Activated naive CD4-positive, alpha-beta T cell treated with anti-CD3 and anti-CD28 coated beads for 36 hours (primary cell): ENCODE measurements at regions of chr2 and their contacts with region 1.

Region 1: GRCh38 chr2:6909431-6910385 is 7.5 kb upstream of the RNF144A start:
- DNase-seq: peak; percentile 64
- H3K4me3 Mint-ChIP-seq: peak overlapping the region; percentile 65
- H3K27ac Mint-ChIP-seq: peak overlapping the region; percentile 100
- H3K4me1 Mint-ChIP-seq: peaks cover 89% of the 10 kb centered on the region
- H3K27me3 Mint-ChIP-seq: no peaks in the 10 kb centered on the region

Region 2: DNA sequence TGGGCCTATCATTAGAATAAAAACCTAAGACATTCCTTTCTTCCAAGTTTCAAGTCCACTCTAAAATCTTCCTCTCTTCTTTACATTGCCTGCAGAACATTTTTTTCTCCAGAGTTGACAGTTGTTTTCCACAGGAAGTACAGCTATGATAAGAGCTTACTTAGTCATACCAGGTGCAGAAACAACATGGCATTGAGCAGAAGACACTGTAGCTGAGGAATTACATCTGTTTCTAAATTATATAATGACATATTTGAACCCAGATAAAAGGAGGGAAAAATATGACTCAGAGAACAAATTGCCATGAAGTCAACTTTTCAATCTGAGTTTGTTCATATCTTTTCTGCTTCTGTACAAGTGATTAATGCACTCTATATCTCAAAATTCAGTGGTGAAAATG is 74.2 kb before region 1 on chr2:
- CTCF ChIA-PET with region 1: no interaction called
- intact Hi-C with region 1: loop called (anchors 1 kb)
- DNase-seq: no peak
- H3K4me3 Mint-ChIP-seq: no peak overlapping the region
- H3K27ac Mint-ChIP-seq: peak overlapping the region; percentile 1
- H3K4me1 Mint-ChIP-seq: peaks cover 19% of the 10 kb centered on the region
- H3K27me3 Mint-ChIP-seq: no peaks in the 10 kb centered on the region

Region 3: DNA sequence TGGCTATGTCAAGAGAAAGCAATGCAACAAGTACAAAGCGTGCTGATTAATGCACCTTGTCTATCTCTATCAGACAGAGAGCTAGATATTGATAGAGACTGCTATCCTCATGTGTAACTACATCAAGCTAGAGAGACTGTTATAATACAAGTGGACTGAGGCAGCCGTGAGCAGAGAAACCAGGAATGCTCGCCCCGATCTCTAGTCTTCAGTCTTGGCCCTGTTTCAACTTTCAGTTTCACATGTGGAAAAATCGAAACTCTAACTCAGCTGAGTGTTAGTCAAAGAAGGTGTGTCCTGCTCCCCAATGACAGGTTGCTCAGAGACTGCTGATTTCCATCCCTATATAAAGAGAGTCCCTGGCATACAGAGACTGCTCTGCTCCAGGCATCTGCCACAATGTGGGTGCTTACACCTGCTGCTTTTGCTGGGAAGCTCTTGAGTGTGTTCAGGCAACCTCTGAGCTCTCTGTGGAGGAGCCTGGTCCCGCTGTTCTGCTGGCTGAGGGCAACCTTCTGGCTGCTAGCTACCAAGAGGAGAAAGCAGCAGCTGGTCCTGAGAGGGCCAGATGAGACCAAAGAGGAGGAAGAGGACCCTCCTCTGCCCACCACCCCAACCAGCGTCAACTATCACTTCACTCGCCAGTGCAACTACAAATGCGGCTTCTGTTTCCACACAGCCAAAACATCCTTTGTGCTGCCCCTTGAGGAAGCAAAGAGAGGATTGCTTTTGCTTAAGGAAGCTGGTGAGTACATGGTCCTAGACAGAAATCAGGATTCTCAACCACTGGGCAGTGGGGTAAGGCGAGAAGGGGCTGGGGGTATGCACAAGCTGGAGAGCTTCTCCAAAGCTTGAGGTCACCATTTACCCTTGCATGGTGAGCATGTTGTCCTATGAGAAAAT is 32.1 kb before region 1 on chr2 and contains the start of gene RSAD2:
- CTCF ChIA-PET with region 1: interaction called, 6 read pairs
- intact Hi-C with region 1: loop called (anchors 1 kb)
- DNase-seq: peak; percentile 45
- H3K4me3 Mint-ChIP-seq: peak within 1 kb of the TSS; percentile 68
- H3K27ac Mint-ChIP-seq: no peak within 1 kb of the TSS
- H3K4me1 Mint-ChIP-seq: peaks cover 66% of the 10 kb centered on the region
- H3K27me3 Mint-ChIP-seq: no peaks in the 10 kb centered on the region
- total RNA-seq, gene RSAD2: 9.1 to 9.9 TPM

Region 4: GRCh38 chr2:7191932-7192331 is 282.2 kb after region 1 on chr2:
- CTCF ChIA-PET with region 1: no interaction called
- intact Hi-C with region 1: loop called (anchors 5 kb)
- DNase-seq: no peak
- H3K4me3 Mint-ChIP-seq: no peak overlapping the region
- H3K27ac Mint-ChIP-seq: no peak overlapping the region
- H3K4me1 Mint-ChIP-seq: peaks cover 15% of the 10 kb centered on the region
- H3K27me3 Mint-ChIP-seq: no peaks in the 10 kb centered on the region

Region 5: DNA sequence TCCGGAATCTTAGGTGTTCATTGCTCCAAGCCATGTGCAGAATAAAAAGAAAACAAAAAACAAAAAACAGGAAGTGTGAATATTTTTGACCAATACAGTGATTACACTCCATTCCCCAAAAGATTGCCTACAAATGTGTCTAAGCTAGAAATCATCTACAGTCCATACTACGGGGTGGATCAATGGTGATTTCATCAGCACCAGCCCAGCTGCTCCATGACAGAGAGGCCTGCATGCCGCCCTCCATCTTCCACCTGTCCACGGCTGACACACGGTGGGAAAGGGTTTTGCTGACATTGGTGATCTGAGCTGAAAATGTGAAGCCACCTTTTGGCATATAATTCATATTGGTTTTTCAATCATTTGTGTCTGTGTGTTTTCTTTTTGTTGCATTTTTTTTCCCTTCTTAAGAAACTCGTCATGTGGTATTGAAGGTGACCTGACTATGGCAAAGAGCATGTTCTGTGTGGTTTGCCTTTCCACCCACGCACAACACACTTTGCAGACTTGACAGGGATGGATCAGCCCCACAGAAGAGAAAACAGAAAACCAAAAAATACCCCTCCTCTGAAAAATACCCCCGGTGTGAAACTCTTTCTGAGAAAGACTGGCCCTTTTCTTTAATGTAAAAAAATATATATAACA is 540.6 kb after region 1 on chr2:
- CTCF ChIA-PET with region 1: no interaction called
- intact Hi-C with region 1: loop called (anchors 5 kb)
- DNase-seq: peak; percentile 75
- H3K4me3 Mint-ChIP-seq: peak overlapping the region; percentile 41
- H3K27ac Mint-ChIP-seq: peak overlapping the region; percentile 88
- H3K4me1 Mint-ChIP-seq: peaks cover 66% of the 10 kb centered on the region
- H3K27me3 Mint-ChIP-seq: no peaks in the 10 kb centered on the region